AG04450 (cell line): ENCODE measurements at regions of chr6 and their contacts with region 1.

Region 1: DNA sequence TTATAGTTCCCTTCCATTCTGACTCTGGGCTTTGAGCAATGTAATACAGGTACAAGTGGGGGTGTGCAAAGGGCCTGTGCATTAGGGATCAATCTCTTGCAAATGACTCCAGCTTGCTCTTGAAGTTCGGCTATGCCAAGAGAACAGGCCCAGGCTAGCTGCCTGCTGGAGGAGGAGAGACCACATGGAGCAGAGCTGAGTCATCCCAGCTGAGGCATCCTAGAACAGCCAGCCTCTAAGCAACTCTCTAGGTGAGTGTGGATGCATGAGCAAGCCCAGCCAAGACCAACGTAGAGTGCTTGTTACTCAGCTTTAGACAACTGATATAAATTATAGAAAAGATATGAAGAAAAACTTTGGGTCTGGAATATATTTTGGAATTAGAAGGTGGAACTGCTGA is 47.6 kb upstream of the RBM24 start:
- DNase-seq: no peak
- H3K4me3 ChIP-seq: no peak overlapping the region
- H3K27ac ChIP-seq: no peak overlapping the region
- H3K27me3 ChIP-seq: peaks cover 5% of the 10 kb centered on the region
- CTCF ChIP-seq: no peak

Region 2: DNA sequence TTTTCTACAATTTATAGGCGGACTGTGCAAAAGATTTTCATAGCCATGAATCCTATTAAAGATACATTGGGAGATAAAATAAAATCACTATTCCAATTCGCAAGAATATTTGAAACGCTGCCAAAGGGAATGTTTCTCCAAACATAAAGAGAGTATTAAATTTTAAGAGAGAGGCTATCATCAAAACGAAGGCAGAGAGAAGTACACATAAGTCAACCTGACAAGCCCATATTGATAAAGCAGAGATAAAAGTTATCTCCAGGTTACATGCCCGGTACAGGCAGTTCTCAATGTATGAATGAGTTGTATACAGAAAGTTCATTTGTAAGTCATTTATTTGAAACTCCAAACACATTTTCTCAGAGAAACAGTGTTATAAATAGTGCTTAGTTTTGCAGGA is 665.4 kb before region 1 on chr6:
- CTCF ChIA-PET with region 1: no interaction called
- POLR2A ChIA-PET with region 1: no interaction called
- DNase-seq: no peak
- H3K4me3 ChIP-seq: no peak overlapping the region
- H3K27ac ChIP-seq: no peak overlapping the region
- H3K27me3 ChIP-seq: no peaks in the 10 kb centered on the region
- CTCF ChIP-seq: no peak

Region 3: GRCh38 chr6:16982807-16983206 is 250.7 kb before region 1 on chr6:
- CTCF ChIA-PET with region 1: no interaction called
- POLR2A ChIA-PET with region 1: no interaction called
- DNase-seq: peak; percentile 98
- H3K4me3 ChIP-seq: no peak overlapping the region
- H3K27ac ChIP-seq: no peak overlapping the region
- H3K27me3 ChIP-seq: no peaks in the 10 kb centered on the region
- CTCF ChIP-seq: no peak

Region 4: GRCh38 chr6:17250237-17250636 is 16.7 kb after region 1 on chr6:
- CTCF ChIA-PET with region 1: no interaction called
- POLR2A ChIA-PET with region 1: interaction called, 10 read pairs
- DNase-seq: no peak
- H3K4me3 ChIP-seq: no peak overlapping the region
- H3K27ac ChIP-seq: no peak overlapping the region
- H3K27me3 ChIP-seq: peaks cover 2% of the 10 kb centered on the region
- CTCF ChIP-seq: no peak